Activated naive CD4-positive, alpha-beta T cell treated with anti-CD3 and anti-CD28 coated beads for 36 hours (primary cell): ENCODE measurements at regions of chr2 and their contacts with region 1.

Region 1: GRCh38 chr2:27016801-27017325 is 15.9 kb upstream of the TMEM214 start:
- DNase-seq: peak; percentile 70
- H3K4me3 Mint-ChIP-seq: no peak overlapping the region
- H3K27ac Mint-ChIP-seq: no peak overlapping the region
- H3K4me1 Mint-ChIP-seq: no peaks in the 10 kb centered on the region
- H3K27me3 Mint-ChIP-seq: no peaks in the 10 kb centered on the region

Region 2: DNA sequence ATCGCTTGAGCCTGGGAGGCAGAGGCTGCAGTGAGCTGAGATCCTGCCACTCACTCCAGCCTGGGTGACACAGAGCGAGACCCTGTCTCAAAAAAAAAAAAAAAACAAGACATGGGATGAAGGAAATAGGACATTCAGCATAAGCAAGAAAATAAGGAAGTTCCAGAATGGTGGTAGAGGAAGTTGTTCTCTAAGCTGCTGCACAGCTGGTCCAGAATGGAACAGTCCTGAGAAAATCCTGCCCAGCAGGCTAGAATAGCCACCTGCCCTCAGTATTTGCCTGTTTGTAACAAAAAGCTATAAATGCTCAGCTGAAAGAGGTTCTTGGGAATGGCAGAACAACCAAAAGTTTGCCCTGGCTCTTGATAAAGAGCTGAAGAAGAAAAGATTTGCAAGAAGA is 57.5 kb before region 1 on chr2:
- CTCF ChIA-PET with region 1: interaction called, 96 read pairs
- intact Hi-C with region 1: loop called (anchors 1 kb)
- DNase-seq: no peak
- H3K4me3 Mint-ChIP-seq: no peak overlapping the region
- H3K27ac Mint-ChIP-seq: no peak overlapping the region
- H3K4me1 Mint-ChIP-seq: no peaks in the 10 kb centered on the region
- H3K27me3 Mint-ChIP-seq: peaks cover 12% of the 10 kb centered on the region

Region 3: GRCh38 chr2:26964446-26965130 is 52.3 kb before region 1 on chr2:
- CTCF ChIA-PET with region 1: interaction called, 96 read pairs
- intact Hi-C with region 1: loop called (anchors 1 kb)
- DNase-seq: no peak
- H3K4me3 Mint-ChIP-seq: no peak overlapping the region
- H3K27ac Mint-ChIP-seq: no peak overlapping the region
- H3K4me1 Mint-ChIP-seq: peaks cover 6% of the 10 kb centered on the region
- H3K27me3 Mint-ChIP-seq: peaks cover 14% of the 10 kb centered on the region

Region 4: GRCh38 chr2:26993768-26994167 is 23.1 kb before region 1 on chr2:
- CTCF ChIA-PET with region 1: interaction called, 14 read pairs
- intact Hi-C with region 1: no loop called
- DNase-seq: no peak
- H3K4me3 Mint-ChIP-seq: no peak overlapping the region
- H3K27ac Mint-ChIP-seq: no peak overlapping the region
- H3K4me1 Mint-ChIP-seq: no peaks in the 10 kb centered on the region
- H3K27me3 Mint-ChIP-seq: no peaks in the 10 kb centered on the region

Region 5: GRCh38 chr2:27069436-27069835 is 52.6 kb after region 1 on chr2:
- CTCF ChIA-PET with region 1: no interaction called
- intact Hi-C with region 1: no loop called
- DNase-seq: no peak
- H3K4me3 Mint-ChIP-seq: peak overlapping the region; percentile 2
- H3K27ac Mint-ChIP-seq: peak overlapping the region; percentile 25
- H3K4me1 Mint-ChIP-seq: peaks cover 65% of the 10 kb centered on the region
- H3K27me3 Mint-ChIP-seq: no peaks in the 10 kb centered on the region

Region 6: GRCh38 chr2:27903649-27904404 is 887.0 kb after region 1 on chr2:
- CTCF ChIA-PET with region 1: no interaction called
- intact Hi-C with region 1: no loop called
- DNase-seq: no peak
- H3K4me3 Mint-ChIP-seq: no peak overlapping the region
- H3K27ac Mint-ChIP-seq: no peak overlapping the region
- H3K4me1 Mint-ChIP-seq: peaks cover 52% of the 10 kb centered on the region
- H3K27me3 Mint-ChIP-seq: no peaks in the 10 kb centered on the region